PC-9 (cell line): ENCODE measurements at regions of chr19 and their contacts with region 1.

Region 1: GRCh38 chr19:40348125-40348913 is at the starts of genes C19orf47 and PLD3:
- DNase-seq: peak; percentile 95 to 99
- H3K4me3 ChIP-seq: peak within 1 kb of the TSS; percentile 96
- H3K27ac ChIP-seq: peak within 1 kb of the TSS; percentile 32; the same call in 1 of the 2 replicates
- H3K4me1 ChIP-seq: peaks cover 17% of the 10 kb centered on the region; the same call in 1 of the 2 replicates
- H3K27me3 ChIP-seq: no peaks in the 10 kb centered on the region
- CTCF ChIP-seq: no peak
- total RNA-seq, gene C19orf47: 17.3 and 21.2 TPM in 2 replicates
- total RNA-seq, gene PLD3: 146 and 187 TPM in 2 replicates

Region 2: DNA sequence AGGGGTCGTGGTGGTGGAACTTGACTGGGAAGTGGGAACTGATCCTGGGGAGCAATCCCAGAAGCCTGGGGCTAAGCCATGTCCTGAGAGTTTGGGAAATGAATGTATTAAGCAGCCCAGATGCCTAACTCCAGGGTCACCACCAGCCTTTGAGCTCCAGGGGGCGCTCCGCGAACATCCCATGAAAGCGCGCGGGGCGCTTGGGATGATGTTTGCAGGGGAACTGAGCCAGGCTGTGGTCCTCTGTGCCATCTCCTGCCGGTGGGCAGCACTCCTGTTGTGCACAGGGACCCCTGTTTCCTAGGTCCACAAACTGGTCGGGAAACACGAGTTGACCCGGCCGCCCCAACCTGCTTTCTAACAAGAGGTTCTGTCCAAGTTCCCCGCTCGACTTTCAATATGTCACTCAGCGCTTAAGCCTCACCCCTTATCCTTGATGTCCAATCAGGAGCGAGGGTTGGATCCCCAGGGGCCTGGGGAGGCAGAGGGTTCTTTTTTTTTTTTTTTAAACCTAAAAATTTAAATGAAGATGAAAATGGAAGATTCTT is 555.2 kb before region 1 on chr19:
- CTCF ChIA-PET with region 1: interaction called, 22 read pairs
- POLR2A ChIA-PET with region 1: no interaction called
- intact Hi-C with region 1: no loop called
- DNase-seq: peak in 1 of 2 experiments; percentile 66
- H3K4me3 ChIP-seq: no peak overlapping the region
- H3K27ac ChIP-seq: no peak overlapping the region
- H3K4me1 ChIP-seq: no peaks in the 10 kb centered on the region
- H3K27me3 ChIP-seq: peaks cover 9% of the 10 kb centered on the region
- CTCF ChIP-seq: peak; percentile 85

Region 3: GRCh38 chr19:40312533-40312932 is 35.8 kb before region 1 on chr19:
- CTCF ChIA-PET with region 1: no interaction called
- POLR2A ChIA-PET with region 1: no interaction called
- intact Hi-C with region 1: no loop called
- DNase-seq: no peak
- H3K4me3 ChIP-seq: no peak overlapping the region
- H3K27ac ChIP-seq: no peak overlapping the region
- H3K4me1 ChIP-seq: no peaks in the 10 kb centered on the region
- H3K27me3 ChIP-seq: no peaks in the 10 kb centered on the region
- CTCF ChIP-seq: no peak

Region 4: GRCh38 chr19:40392872-40393845 is 44.8 kb after region 1 on chr19:
- CTCF ChIA-PET with region 1: no interaction called
- POLR2A ChIA-PET with region 1: no interaction called
- intact Hi-C with region 1: loop called (anchors 5 kb)
- DNase-seq: peak; percentile 70 to 85
- H3K4me3 ChIP-seq: peak overlapping the region; percentile 40; the same call in 1 of the 2 replicates
- H3K27ac ChIP-seq: peak overlapping the region; percentile 33; the same call in 1 of the 2 replicates
- H3K4me1 ChIP-seq: peaks cover 18% of the 10 kb centered on the region
- H3K27me3 ChIP-seq: no peaks in the 10 kb centered on the region
- CTCF ChIP-seq: peak; percentile 76

Region 5: GRCh38 chr19:40444192-40445028 is 96.1 kb after region 1 on chr19 and contains the start of gene SERTAD3:
- CTCF ChIA-PET with region 1: no interaction called
- POLR2A ChIA-PET with region 1: interaction called, 3 read pairs
- intact Hi-C with region 1: loop called (anchors 5 kb)
- DNase-seq: peak; percentile 75 to 98
- H3K4me3 ChIP-seq: peak within 1 kb of the TSS; percentile 75
- H3K27ac ChIP-seq: peak within 1 kb of the TSS; percentile 70
- H3K4me1 ChIP-seq: peaks cover 12% of the 10 kb centered on the region
- H3K27me3 ChIP-seq: no peaks in the 10 kb centered on the region
- CTCF ChIP-seq: no peak
- total RNA-seq, gene SERTAD3: 35.9 and 41.4 TPM in 2 replicates

Region 6: DNA sequence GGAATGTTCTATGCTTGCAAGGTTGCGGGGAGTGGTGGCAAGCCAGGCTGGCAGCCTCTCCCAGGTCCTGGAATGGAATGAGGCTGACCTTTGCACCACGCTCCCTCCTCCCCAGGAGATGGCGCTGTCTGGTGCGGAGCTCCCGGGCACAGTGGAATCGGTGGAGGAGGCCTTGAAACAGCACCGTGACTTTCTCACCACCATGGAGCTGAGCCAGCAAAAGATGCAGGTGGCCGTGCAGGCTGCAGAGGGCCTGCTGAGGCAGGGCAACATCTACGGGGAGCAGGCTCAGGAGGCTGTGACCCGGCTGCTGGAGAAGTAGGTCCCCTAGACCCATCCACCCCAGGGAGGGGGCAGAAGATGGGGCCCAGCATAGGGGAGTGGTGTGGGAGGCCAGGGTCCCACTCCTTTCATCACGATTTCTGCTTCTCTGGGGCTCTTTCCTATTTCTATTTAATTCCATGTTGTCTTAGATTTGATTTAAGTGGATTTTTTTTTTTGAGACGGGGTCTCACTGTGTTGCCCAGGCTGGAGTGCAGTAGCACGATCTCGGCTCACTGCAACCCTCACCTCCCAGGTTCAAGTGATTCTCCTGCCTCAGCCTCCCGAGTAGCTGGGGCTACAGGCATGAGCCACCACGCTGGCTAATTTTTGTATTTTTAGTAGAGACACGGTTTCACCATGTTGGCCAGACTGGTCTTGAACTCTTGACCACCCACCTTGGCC is 175.2 kb after region 1 on chr19:
- CTCF ChIA-PET with region 1: no interaction called
- POLR2A ChIA-PET with region 1: no interaction called
- intact Hi-C with region 1: loop called (anchors 2 kb)
- DNase-seq: peak; percentile 61 to 75
- H3K4me3 ChIP-seq: no peak overlapping the region
- H3K27ac ChIP-seq: no peak overlapping the region
- H3K4me1 ChIP-seq: no peaks in the 10 kb centered on the region
- H3K27me3 ChIP-seq: peaks cover 4% of the 10 kb centered on the region; the same call in 1 of the 2 replicates
- CTCF ChIP-seq: peak; percentile 70

Region 7: GRCh38 chr19:40806488-40807468 is 458.5 kb after region 1 on chr19:
- CTCF ChIA-PET with region 1: interaction called, 16 read pairs
- POLR2A ChIA-PET with region 1: no interaction called
- intact Hi-C with region 1: no loop called
- DNase-seq: no peak
- H3K4me3 ChIP-seq: no peak overlapping the region
- H3K27ac ChIP-seq: no peak overlapping the region
- H3K4me1 ChIP-seq: peaks cover 20% of the 10 kb centered on the region; the same call in 1 of the 2 replicates
- H3K27me3 ChIP-seq: no peaks in the 10 kb centered on the region
- CTCF ChIP-seq: no peak